ENCODE measurements at regions of chr2 and their contacts with region 1.

Region 1: GRCh38 chr2:230798769-230799399 is 65.9 kb upstream of the ITM2C start:
- DNase-seq: peak; percentile 62
- H3K4me3 Mint-ChIP-seq: no peak overlapping the region
- H3K27ac Mint-ChIP-seq: peak overlapping the region; percentile 82
- H3K4me1 Mint-ChIP-seq: peaks cover 21% of the 10 kb centered on the region
- H3K27me3 Mint-ChIP-seq: no peaks in the 10 kb centered on the region

Region 2: DNA sequence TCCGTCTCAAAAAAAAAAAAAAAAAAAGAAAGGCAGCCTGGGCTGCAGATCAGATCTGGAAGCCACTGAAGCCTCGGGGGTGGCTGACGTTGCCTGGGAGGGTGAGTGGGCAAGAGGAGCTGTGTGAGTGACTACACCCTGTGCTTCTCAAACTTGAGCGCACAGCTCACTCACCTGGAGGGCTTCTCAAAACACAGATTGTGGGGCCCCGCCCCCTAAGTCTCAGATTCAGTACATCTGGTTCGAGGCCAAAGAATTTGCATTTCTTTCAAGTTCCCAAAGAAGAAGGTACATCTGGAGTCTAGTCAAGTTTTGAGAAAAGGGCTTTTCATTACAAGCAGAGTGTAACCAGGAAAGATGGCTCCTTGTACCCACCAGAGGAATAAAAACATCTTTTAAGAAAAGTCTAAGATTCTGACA is 184.0 kb before region 1 on chr2:
- CTCF ChIA-PET with region 1: interaction called, 10 read pairs
- DNase-seq: peak; percentile 52
- H3K4me3 Mint-ChIP-seq: no peak overlapping the region
- H3K27ac Mint-ChIP-seq: peak overlapping the region; percentile 42
- H3K4me1 Mint-ChIP-seq: peaks cover 64% of the 10 kb centered on the region
- H3K27me3 Mint-ChIP-seq: peaks cover 3% of the 10 kb centered on the region

Region 3: GRCh38 chr2:230712443-230713330 is 86.2 kb before region 1 on chr2 and contains the start of gene CAB39:
- CTCF ChIA-PET with region 1: interaction called, 22 read pairs
- DNase-seq: peak; percentile 89
- H3K4me3 Mint-ChIP-seq: peak within 1 kb of the TSS; percentile 94
- H3K27ac Mint-ChIP-seq: peak within 1 kb of the TSS; percentile 96
- H3K4me1 Mint-ChIP-seq: peaks cover 46% of the 10 kb centered on the region
- H3K27me3 Mint-ChIP-seq: peaks cover 4% of the 10 kb centered on the region

Region 4: GRCh38 chr2:230781130-230781797 is 17.6 kb before region 1 on chr2:
- CTCF ChIA-PET with region 1: interaction called, 17 read pairs
- DNase-seq: peak; percentile 63
- H3K4me3 Mint-ChIP-seq: no peak overlapping the region
- H3K27ac Mint-ChIP-seq: peak overlapping the region; percentile 71
- H3K4me1 Mint-ChIP-seq: peaks cover 80% of the 10 kb centered on the region
- H3K27me3 Mint-ChIP-seq: no peaks in the 10 kb centered on the region

Region 5: GRCh38 chr2:230809677-230810251 is 10.9 kb after region 1 on chr2:
- CTCF ChIA-PET with region 1: interaction called, 11 read pairs
- DNase-seq: no peak
- H3K4me3 Mint-ChIP-seq: no peak overlapping the region
- H3K27ac Mint-ChIP-seq: peak overlapping the region; percentile 33
- H3K4me1 Mint-ChIP-seq: peaks cover 20% of the 10 kb centered on the region
- H3K27me3 Mint-ChIP-seq: no peaks in the 10 kb centered on the region

Measured in activated naive CD4-positive, alpha-beta T cell treated with anti-CD3 and anti-CD28 coated beads, Interleukin-2, amount 10 ng/mL, durations not matched to agents 7 days and 5 days (primary cell).